ENCODE measurements at regions of chr7 and their contacts with region 1.

Region 1: DNA sequence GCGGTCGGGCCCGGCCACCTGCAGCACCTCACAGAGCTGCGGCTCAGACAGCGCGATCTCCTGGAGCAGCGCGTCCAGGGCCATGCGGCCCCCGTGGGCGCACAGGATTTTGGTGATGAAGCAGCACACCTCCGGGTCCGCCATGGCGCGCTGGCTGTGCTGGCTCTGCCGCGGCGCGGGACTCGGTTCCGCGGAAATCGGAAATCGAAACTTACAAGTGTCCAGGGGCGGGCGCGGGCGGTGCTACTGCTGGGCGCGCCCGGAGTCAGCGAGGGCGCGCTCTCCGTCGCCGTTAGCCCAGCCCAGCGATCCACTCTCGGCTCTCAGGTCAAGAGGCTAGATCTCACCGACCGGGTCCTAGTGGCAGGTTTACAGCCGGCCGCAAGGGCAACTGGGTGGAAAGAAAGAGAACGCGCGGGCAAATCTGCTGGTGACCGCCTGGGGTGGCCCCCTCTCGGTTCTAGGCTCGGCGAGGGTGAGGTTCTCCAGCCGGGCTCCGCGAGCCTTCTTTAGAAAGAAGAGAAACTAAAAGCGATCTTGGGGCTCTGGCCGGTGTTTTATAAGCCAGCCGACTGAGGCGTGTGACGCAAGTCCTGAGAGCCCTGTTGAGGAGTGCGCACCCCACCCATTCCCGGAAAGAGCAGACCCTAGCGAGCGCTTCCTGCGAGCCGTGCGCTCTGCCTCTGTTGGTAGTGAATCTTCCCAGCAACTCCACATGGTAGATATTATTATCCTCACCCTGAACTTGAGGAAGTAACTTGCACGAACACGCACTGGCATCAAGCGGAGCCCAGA is at the start of gene ZC3HAV1:
- DNase-seq: peak; percentile 89
- CTCF ChIP-seq: no peak

Region 2: DNA sequence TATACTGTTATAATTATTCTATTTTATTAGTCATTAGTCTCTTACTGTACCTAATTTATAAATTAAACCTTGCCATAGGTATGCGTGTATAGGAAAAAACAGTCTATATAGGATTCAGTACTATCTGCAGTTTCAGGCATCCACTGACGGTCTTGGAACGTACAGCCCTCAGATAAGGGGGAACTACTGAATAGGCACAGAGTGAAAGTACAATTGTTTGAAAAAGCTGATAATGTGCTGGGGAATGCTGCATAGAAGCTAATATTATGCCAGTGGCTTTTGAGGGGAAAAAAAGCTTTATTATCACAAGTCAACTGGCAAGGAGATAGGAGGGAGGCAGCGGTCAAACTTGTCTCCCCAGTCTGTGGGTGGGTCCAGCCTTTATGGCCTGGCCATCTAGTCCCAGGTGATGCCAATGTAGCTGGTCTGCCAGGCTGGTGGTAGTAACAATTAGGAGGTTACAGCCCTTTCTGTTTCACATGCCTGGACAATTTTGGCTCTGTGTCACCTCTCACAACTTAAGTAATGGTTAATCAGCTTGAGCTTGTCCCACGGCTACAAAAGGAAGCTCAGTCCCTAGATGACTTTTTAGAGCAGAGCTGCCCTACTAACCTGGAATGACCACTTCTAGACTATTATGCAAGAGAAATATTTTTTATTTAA is 223.4 kb after region 1 on chr7:
- in situ Hi-C with region 1: loop called (anchors 10 kb)
- DNase-seq: no peak
- CTCF ChIP-seq: no peak

Measured in GM13977 (cell line).